ENCODE measurements at regions of chr2 and their contacts with region 1.

Region 1: GRCh38 chr2:207166039-207166348 is 246 bp upstream of the KLF7 start:
- DNase-seq: peak; percentile 100

Region 2: GRCh38 chr2:206800506-206801417 is 365.2 kb before region 1 on chr2:
- intact Hi-C with region 1: loop called (anchors 5 kb)
- DNase-seq: no peak

Region 3: DNA sequence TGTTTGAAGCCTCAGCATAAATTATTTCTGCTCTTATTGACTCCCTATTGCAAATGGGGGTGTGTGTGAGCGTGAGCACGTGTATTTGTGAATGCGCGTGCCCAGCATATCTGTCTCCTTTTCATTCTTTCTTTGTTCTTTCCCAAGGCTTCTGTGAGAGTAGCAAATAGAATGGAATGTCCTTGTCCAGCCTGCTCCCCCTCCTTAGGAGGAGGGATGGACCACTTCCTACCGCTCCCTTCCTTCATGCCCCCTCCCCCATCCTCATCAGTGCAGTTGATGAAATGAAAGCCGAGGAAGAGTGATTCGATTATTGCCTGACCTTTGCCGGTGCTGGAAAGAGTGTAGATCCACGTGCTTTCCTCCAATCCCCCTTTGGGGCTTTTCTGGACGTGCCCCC is 124.7 kb before region 1 on chr2:
- intact Hi-C with region 1: loop called (anchors 5 kb)
- DNase-seq: no peak

Region 4: DNA sequence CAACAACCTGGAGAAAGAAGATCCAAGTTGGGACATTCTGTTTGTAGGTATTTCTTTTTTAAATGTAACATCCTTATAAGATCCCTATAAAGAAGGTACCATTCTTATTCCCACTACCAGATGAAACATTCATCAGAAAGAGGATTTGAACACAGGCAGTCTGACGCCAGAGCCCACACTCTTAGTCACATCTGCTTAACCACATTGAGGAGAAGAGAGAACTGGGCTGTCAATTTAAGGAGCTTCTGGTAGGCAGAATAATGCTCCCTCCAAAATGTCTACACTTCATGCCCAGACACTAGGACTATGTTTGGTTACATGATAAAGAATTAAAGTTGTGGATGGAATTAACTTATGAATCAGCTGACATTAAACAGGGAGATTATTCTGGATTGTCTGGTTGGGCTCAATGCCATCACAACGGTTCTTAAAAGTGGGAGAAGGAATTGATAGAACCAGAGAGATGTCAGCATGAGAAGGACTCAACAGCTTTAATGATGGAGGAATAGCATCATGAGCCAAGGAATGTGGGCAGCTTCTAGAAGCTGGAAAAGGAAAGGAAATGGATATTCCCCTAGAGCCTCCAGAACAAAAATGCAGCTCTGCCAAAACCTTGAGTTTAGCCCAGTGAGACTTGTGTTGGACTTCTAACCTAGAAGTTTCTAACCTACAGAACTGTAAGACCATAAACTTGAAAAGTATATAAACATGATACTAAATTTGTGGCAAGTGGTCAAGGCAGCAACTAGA is 82.5 kb before region 1 on chr2:
- intact Hi-C with region 1: no loop called
- DNase-seq: no peak

Region 5: GRCh38 chr2:207133820-207134519 is 32.0 kb before region 1 on chr2:
- intact Hi-C with region 1: loop called (anchors 5 kb)
- DNase-seq: peak; percentile 88

Region 6: DNA sequence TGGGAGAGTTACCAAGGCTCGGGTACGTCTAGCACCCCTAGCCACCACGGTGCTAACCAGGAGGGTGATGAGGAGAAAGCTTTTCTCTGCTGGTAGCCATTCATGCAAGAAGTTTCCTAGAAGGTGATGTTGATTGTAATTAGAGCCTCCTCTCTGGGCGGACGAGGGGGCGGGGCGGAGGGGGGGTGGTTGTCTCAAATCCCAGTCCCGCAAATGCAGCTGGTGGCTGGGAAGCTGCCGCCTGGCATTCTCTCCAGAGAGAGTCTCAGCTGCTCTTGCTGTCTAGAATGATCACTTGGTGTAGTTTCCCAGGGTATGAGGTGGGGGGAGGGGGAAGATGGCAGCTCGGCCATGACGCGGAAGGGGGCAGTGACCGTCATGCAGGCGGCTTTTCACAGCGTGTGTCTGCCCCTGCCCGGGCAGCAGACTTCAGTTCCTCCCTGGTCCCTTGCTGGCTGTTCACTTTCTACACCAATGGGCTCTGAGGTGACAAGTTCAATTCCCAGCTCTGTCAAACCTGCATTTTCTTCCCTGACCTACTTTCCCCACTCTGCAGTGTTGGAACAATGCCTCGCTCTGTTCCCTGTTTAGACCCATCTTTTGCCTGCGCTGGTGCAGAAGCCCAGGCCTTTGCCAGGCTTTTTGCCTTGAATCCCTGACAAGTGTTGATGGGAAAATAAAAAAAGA is 61.2 kb after region 1 on chr2:
- intact Hi-C with region 1: loop called (anchors 5 kb)
- DNase-seq: no peak

Measured in cardiac septum (tissue), 1 donor.